GM13976 (cell line): ENCODE measurements at regions of chr1 and their contacts with region 1.

Region 1: DNA sequence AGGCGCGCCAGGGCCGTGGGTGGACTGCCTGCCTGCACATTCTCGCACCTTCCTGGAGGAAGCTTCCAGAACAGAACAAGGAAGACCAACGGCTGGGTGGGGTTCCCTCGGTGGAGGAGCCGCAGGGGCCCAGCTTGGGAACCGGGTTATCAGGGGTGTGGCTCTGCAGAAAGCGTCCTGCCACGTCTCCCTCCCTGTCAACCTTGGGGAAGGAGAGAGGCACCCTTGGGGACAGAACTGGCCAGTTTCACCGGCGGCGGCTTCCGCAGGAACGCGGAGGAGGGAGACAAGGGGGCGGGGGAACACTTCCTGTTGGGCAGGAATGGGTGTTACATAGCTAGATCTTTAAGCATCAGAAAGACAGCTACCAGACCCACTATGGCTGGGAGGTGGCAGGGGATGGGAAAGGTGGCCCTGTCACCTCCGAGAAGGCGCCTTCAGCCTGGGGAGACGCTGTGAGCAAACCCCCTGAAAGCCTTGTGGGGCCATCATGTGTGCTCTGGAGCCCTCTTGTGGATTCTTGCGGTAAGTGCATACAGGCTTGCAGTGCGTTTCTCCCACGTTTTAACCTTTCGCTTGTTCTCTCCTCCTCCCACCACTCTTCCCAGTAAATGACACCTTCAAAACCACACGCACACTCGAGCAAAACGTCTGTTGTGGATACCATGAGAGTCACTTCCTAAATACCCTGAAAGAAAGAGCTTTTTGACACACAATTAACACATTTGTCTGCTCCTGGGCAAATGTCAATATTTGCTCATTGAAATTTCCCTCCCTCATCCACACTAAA is 3.8 kb upstream of the PLEKHA6 start:
- DNase-seq: peak; percentile 83
- CTCF ChIP-seq: peak; percentile 71

Region 2: GRCh38 chr1:204162231-204163074 is 201.1 kb before region 1 on chr1:
- in situ Hi-C with region 1: loop called (anchors 10 kb)
- DNase-seq: peak; percentile 87
- CTCF ChIP-seq: peak; percentile 96